Common myeloid progenitor, CD34-positive (primary cell): ENCODE measurements at regions of chr22 and their contacts with region 1.

Region 1: DNA sequence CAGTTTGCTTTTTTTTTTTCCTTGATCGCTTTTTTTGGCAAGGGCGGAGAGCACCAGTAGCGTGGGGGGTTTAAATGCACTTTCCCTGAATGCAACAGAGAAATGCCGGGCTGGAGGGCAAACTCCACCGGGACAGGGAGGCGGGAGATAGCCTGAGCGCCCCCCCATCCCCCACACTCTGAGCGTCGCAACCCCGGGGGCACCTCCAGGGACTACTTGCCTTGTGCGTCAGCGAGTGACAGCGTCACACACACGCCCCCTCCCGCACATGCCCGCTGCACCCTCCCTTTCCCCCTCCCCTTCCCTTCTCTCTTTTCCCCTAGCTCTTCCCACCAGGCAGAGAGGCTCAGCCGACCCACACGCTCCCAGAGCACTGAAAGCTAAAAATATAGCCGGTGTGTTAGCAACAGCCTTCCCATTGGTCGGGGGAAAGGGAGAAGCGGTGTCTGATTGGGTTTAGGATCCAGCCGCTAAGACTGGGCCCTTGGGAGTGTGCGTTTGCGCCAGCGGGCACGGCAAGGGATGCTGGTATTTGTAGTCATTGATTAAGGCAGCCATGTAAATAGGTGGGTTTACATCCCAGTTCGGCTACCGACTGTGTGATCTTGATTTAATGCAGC is 1.7 kb upstream of the TOB2 start:
- DNase-seq: peak; percentile 99 to 100 (median 100)
- H3K4me3 ChIP-seq: peak overlapping the region; percentile 85 to 99 (median 93)
- H3K27ac ChIP-seq: peak overlapping the region; percentile 88 to 97
- H3K4me1 ChIP-seq: peaks cover 11 to 35% (median 29%) of the 10 kb centered on the region in 4 experiments
- H3K27me3 ChIP-seq: no peaks in the 10 kb centered on the region

Region 2: GRCh38 chr22:41334215-41334614 is 114.1 kb before region 1 on chr22:
- CTCF ChIA-PET with region 1: no interaction called
- POLR2A ChIA-PET with region 1: no interaction called
- DNase-seq: no peak
- H3K4me3 ChIP-seq: no peak overlapping the region
- H3K27ac ChIP-seq: no peak overlapping the region
- H3K4me1 ChIP-seq: no peaks in the 10 kb centered on the region
- H3K27me3 ChIP-seq: no peaks in the 10 kb centered on the region

Region 3: GRCh38 chr22:41468381-41469217 is 20.3 kb after region 1 on chr22 and contains the starts of genes ACO2 and PHF5A:
- CTCF ChIA-PET with region 1: interaction called, 4 read pairs
- POLR2A ChIA-PET with region 1: interaction called, 34 read pairs
- DNase-seq: peak; percentile 98 to 99 (median 99)
- H3K4me3 ChIP-seq: peak within 1 kb of the TSS; percentile 91 to 99 (median 94)
- H3K27ac ChIP-seq: peak within 1 kb of the TSS; percentile 99 to 100
- H3K4me1 ChIP-seq: peaks cover 11 to 23% (median 18%) of the 10 kb centered on the region in 4 experiments
- H3K27me3 ChIP-seq: no peaks in the 10 kb centered on the region